Mammary epithelial cell (primary cell): ENCODE measurements at regions of chr3 and their contacts with region 1.

Region 1: GRCh38 chr3:44529927-44530326 is 25.1 kb upstream of the ZKSCAN7 start:
- DNase-seq: no peak
- H3K4me3 ChIP-seq: no peak overlapping the region
- H3K27ac ChIP-seq: no peak overlapping the region
- H3K4me1 ChIP-seq: no peaks in the 10 kb centered on the region
- H3K27me3 ChIP-seq: no peaks in the 10 kb centered on the region
- CTCF ChIP-seq: peak; percentile 33 to 36

Region 2: DNA sequence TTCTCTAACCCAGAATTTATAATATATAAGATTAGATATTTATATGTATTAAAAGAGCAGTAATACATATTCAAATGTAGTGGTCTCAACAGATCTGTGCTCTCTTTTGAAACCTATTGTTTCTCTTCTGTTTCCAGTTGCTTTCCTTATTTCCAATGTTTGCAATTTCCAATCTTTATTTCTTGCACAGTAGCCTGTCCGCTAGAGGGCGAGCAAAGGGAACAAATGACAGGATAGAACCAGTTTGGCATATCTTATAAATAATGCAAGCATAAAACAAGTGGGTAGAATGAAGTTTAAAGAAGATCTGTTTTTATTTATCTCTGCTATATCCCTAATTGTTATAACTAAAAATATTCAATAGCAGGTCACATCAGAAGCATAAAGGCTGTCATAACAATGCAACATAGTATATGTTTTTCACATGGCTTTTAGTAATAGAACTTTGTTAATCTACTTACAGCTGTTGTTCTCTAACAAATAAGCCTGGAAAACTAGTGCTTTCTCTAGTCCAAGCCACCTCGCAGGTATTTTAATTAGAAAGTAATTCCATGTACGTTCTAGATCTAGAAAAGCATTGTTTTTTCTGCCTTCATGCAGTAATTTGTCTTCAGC is 206.5 kb before region 1 on chr3:
- CTCF ChIA-PET with region 1: no interaction called
- dilution Hi-C with region 1: no loop called
- in situ Hi-C with region 1: no loop called
- intact Hi-C with region 1: loop called (anchors 5 kb)
- DNase-seq: peak; percentile 42
- H3K4me3 ChIP-seq: no peak overlapping the region
- H3K27ac ChIP-seq: no peak overlapping the region
- H3K4me1 ChIP-seq: no peaks in the 10 kb centered on the region
- H3K27me3 ChIP-seq: no peaks in the 10 kb centered on the region
- CTCF ChIP-seq: peak; percentile 88 to 91

Region 3: DNA sequence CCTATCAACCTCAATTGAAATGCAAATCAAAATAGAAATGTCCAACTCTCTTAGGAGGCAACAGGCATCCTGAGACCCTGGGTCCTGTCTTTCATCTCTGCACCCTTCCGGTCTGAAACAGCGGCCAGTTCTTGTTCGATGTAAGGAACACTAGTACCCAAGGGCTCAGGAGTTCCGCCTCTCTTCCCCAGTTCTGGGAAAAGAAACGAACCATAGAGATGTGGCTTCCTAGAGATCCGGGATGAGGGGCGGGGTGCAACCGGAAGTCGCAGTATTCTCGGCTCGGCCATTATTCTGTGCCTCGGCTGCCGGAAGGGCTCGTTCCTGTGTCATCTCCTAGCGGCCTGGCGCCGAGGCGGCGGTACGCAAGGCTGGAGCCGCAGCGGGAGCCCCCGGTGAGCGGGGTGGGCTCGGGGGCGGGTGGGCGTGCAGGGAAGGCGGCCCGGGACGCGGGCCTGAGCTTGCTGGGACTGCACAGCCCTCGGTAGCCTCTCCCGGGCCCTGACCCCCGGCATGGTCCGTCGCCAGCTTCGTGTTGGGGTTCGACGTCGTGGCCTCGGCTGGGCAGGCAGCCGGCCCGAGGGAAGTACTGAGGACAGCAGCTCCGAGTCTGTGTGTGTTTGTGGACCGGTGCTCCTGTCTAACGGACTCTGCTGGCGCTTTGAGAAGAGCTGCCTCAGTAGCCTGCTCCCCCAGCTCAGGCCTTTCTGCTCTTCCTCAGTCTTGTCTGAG is 95.0 kb after region 1 on chr3 and contains the start of gene ZNF197:
- CTCF ChIA-PET with region 1: no interaction called
- dilution Hi-C with region 1: no loop called
- in situ Hi-C with region 1: no loop called
- intact Hi-C with region 1: loop called (anchors 1 kb)
- DNase-seq: peak; percentile 86
- H3K4me3 ChIP-seq: peak within 1 kb of the TSS; percentile 78 to 97 (median 94)
- H3K27ac ChIP-seq: peak within 1 kb of the TSS; percentile 59
- H3K4me1 ChIP-seq: peaks cover 5% of the 10 kb centered on the region
- H3K27me3 ChIP-seq: no peaks in the 10 kb centered on the region
- CTCF ChIP-seq: peak in 1 of 2 donors; percentile 25
- total RNA-seq, gene ZNF197: 13.3 to 16.0 TPM

Region 4: DNA sequence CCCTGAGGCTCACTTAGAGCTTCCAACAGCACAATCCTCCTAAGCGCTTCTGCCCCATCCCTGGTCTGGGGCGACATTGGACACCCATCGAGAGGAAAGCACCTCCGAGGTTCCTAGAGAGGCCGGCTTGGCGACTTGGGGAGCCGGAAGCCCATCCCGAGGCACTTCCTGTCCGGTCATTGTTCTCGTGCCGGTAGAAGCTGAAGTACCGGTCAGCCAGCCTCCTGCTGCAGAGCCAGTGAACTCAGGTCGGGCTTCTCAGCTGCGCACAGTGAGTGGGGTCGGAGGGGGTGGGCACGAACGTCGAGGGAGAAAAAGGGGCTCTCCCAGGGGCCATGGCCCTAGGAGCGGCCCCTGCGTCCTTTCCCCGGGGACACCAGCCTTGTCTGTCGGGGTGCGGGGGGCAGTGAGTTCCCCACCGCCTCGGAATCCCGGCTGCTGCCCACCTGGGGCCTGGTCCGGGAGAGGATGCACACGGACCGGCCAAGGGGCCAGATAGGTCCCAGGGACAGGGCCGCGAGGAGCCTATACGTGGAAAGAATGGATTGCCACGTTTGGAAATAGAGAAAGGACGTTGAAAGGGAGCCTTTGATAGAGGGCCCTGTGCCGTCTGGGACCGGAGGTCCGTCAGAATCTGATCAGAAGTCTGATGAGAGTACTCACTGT is 118.8 kb after region 1 on chr3 and contains the start of gene ZNF35:
- CTCF ChIA-PET with region 1: no interaction called
- dilution Hi-C with region 1: no loop called
- in situ Hi-C with region 1: no loop called
- intact Hi-C with region 1: loop called (anchors 1 kb)
- DNase-seq: peak; percentile 85
- H3K4me3 ChIP-seq: peak within 1 kb of the TSS; percentile 91 to 94 (median 94)
- H3K27ac ChIP-seq: peak within 1 kb of the TSS; percentile 52
- H3K4me1 ChIP-seq: no peaks in the 10 kb centered on the region
- H3K27me3 ChIP-seq: no peaks in the 10 kb centered on the region
- CTCF ChIP-seq: no peak
- total RNA-seq, gene ZNF35: 11.5 to 16.3 TPM

Region 5: GRCh38 chr3:44712455-44713075 is 182.6 kb after region 1 on chr3 and contains the start of gene ZNF502:
- CTCF ChIA-PET with region 1: no interaction called
- dilution Hi-C with region 1: no loop called
- in situ Hi-C with region 1: no loop called
- intact Hi-C with region 1: loop called (anchors 5 kb)
- DNase-seq: peak; percentile 80
- H3K4me3 ChIP-seq: peak within 1 kb of the TSS; percentile 72 to 88 (median 81)
- H3K27ac ChIP-seq: peak within 1 kb of the TSS; percentile 4
- H3K4me1 ChIP-seq: no peaks in the 10 kb centered on the region
- H3K27me3 ChIP-seq: no peaks in the 10 kb centered on the region
- CTCF ChIP-seq: peak; percentile 19 to 50
- total RNA-seq, gene ZNF502: 6.0 to 6.1 TPM

Region 6: GRCh38 chr3:44761424-44762169 is 231.7 kb after region 1 on chr3 and contains the starts of genes KIAA1143 and KIF15:
- CTCF ChIA-PET with region 1: no interaction called
- dilution Hi-C with region 1: no loop called
- in situ Hi-C with region 1: no loop called
- intact Hi-C with region 1: loop called (anchors 5 kb)
- DNase-seq: peak; percentile 92
- H3K4me3 ChIP-seq: peak within 1 kb of the TSS; percentile 72 to 97 (median 88)
- H3K27ac ChIP-seq: peak within 1 kb of the TSS; percentile 96
- H3K4me1 ChIP-seq: peaks cover 7% of the 10 kb centered on the region
- H3K27me3 ChIP-seq: no peaks in the 10 kb centered on the region
- CTCF ChIP-seq: peak in 1 of 2 donors; percentile 8
- total RNA-seq, gene KIAA1143: 21.3 to 25.3 TPM
- total RNA-seq, gene KIF15: 0.67 to 7.7 TPM